ENCODE measurements at regions of chr6 and their contacts with region 1.

Region 1: DNA sequence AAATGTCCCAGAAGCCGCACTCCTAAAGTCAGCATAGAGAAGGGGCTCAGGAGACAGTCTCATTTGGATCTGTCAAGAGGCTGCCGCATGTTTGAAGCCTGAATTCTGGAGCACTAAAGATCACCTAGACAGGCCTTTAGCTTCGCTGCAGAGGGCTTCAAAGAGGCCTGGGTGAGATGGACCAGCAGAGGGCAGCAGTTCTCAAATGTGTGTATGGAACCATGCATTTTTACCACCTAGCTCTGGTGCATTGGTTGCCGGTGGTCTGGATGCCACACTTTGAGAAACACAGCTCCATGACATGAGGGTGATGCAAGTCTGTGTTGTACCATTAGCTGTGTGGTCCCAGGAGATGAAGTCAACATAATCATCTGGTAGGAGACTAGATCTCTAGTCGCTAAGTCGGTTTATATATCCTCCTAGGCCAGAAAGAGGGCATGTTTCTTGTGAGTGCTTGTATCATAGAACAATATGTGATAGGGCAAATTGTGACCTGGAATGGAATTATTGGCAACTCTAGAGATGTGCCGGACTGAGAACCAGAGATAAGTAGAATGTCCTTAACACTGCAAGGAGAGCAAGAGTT is 64.8 kb downstream of the KIAA0319 start:
- DNase-seq: peak; percentile 84
- ATAC-seq: peak; percentile 89
- H3K4me3 Mint-ChIP-seq: no peak overlapping the region
- H3K27ac Mint-ChIP-seq: no peak overlapping the region
- H3K4me1 Mint-ChIP-seq: peaks cover 6% of the 10 kb centered on the region
- H3K27me3 Mint-ChIP-seq: peaks cover 16% of the 10 kb centered on the region

Region 2: GRCh38 chr6:24228681-24229255 is 352.4 kb before region 1 on chr6:
- CTCF ChIA-PET with region 1: no interaction called
- DNase-seq: no peak
- ATAC-seq: no peak
- H3K4me3 Mint-ChIP-seq: no peak overlapping the region
- H3K27ac Mint-ChIP-seq: no peak overlapping the region
- H3K4me1 Mint-ChIP-seq: peaks cover 5% of the 10 kb centered on the region
- H3K27me3 Mint-ChIP-seq: peaks cover 16% of the 10 kb centered on the region

Region 3: DNA sequence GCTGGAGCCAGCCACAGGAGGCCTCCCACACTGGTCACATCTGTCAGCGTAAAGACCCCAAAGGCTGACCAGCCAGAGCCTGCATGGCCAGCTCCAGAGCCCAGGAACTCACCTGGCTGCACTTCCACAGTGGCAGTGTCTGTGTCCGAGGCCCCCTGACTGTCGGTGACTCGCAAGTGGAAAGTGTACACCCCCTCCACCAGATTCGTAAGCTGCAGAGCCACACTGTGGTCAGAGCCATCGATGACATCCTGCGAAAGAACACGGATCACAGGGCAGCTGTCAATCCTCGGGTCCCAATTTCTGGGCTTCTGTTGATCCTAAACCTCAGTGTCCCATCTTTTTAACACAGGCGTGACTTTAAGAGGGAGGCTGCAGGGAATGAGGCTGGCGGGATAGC is 17.1 kb before region 1 on chr6:
- CTCF ChIA-PET with region 1: interaction called, 10 read pairs
- DNase-seq: no peak
- ATAC-seq: no peak
- H3K4me3 Mint-ChIP-seq: no peak overlapping the region
- H3K27ac Mint-ChIP-seq: no peak overlapping the region
- H3K4me1 Mint-ChIP-seq: no peaks in the 10 kb centered on the region
- H3K27me3 Mint-ChIP-seq: peaks cover 11% of the 10 kb centered on the region

Region 4: DNA sequence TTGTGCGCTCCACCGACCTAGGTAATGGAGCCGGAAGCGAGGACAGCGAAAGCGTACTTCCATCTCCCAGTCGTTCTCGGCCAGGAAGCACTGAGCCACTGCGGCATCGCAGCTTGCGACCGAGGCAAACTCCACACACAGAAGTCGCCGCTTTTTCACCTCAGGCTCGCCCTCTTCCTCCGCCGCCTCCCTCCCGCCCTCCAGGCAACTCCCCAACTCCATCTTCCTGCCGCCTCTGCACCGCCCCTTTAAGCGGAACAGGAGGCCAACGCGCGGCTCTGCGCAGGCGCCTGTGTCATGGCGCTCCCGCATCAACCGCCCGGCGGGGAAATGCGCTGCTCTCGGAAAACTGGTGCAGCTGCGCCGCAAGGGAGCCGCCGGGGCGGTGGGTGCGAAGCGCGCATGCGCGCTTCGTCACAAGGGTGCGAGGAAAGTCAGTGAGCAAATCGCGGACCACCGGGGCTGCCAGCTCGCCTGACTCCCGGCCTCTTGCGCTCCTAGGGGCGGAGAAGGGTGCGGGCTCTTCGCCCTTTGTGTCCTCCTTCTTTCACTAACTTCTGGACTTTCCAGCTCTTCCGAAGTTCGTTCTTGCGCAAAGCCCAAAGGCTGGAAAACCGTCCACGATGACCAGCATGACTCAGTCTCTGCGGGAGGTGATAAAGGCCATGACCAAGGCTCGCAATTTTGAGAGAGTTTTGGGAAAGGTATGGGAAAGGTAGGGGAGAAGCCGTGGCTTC is 85.6 kb after region 1 on chr6 and contains the starts of genes ACOT13 and TDP2:
- CTCF ChIA-PET with region 1: interaction called, 14 read pairs
- DNase-seq: peak; percentile 97
- ATAC-seq: peak; percentile 94
- H3K4me3 Mint-ChIP-seq: peak within 1 kb of the TSS; percentile 97
- H3K27ac Mint-ChIP-seq: peak within 1 kb of the TSS; percentile 98
- H3K4me1 Mint-ChIP-seq: peaks cover 47% of the 10 kb centered on the region
- H3K27me3 Mint-ChIP-seq: no peaks in the 10 kb centered on the region
- total RNA-seq, gene ACOT13: 21.8 to 25.6 TPM
- total RNA-seq, gene TDP2: 40.5 to 45.7 TPM

Region 5: GRCh38 chr6:24694198-24694597 is 113.0 kb after region 1 on chr6:
- CTCF ChIA-PET with region 1: interaction called, 33 read pairs
- DNase-seq: no peak
- ATAC-seq: no peak
- H3K4me3 Mint-ChIP-seq: no peak overlapping the region
- H3K27ac Mint-ChIP-seq: no peak overlapping the region
- H3K4me1 Mint-ChIP-seq: peaks cover 10% of the 10 kb centered on the region
- H3K27me3 Mint-ChIP-seq: no peaks in the 10 kb centered on the region

Region 6: GRCh38 chr6:24699521-24700359 is 118.6 kb after region 1 on chr6:
- CTCF ChIA-PET with region 1: interaction called, 33 read pairs
- DNase-seq: no peak
- ATAC-seq: no peak
- H3K4me3 Mint-ChIP-seq: no peak overlapping the region
- H3K27ac Mint-ChIP-seq: peak overlapping the region; percentile 57
- H3K4me1 Mint-ChIP-seq: peaks cover 11% of the 10 kb centered on the region
- H3K27me3 Mint-ChIP-seq: no peaks in the 10 kb centered on the region

Region 7: DNA sequence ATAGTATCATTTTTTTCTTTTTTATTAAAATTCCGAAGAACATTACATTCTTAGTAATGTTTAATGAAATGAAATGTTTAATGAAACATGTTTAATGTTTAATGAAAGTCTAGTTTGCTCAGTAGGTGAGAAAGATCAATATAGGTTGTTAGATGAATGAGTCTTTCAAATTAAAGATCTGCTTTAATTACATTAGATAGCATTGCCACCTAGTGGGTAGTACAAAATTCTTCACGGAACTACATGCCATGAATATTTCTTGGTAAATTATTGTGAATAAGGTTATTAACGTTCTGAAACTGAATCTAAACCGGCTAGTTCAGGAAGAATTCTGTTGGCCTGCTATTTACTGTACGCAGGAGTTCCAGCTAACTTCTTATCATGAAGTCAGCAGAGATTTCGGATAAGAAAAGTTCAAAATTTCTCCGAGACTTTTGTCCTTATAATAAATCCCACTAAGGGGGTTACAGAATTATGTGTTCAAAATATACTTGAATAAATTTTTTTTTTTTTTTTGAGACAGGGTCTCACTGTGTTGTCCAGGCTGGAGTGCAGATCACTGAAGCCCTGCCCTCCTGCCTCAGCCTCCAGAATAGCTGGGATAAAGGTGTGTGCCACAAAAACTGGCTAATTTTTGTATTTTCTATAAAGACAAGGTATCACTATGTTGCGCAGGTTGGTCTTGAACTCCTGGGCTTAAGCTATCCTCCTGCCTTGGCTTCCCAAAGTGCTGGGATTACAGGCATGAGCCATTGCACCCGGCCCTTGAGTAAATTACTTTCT is 185.7 kb after region 1 on chr6:
- CTCF ChIA-PET with region 1: interaction called, 46 read pairs
- DNase-seq: no peak
- ATAC-seq: peak; percentile 57
- H3K4me3 Mint-ChIP-seq: no peak overlapping the region
- H3K27ac Mint-ChIP-seq: no peak overlapping the region
- H3K4me1 Mint-ChIP-seq: peaks cover 9% of the 10 kb centered on the region
- H3K27me3 Mint-ChIP-seq: no peaks in the 10 kb centered on the region